Naive thymus-derived CD4-positive, alpha-beta T cell (primary cell): ENCODE measurements at regions of chr1 and their contacts with region 1.

Region 1: GRCh38 chr1:225977937-225978748 is 21.0 kb downstream of the SDE2 start:
- DNase-seq: no peak
- ATAC-seq: peak; percentile 30
- H3K4me3 ChIP-seq: no peak overlapping the region
- H3K4me3 Mint-ChIP-seq: no peak overlapping the region
- H3K27ac ChIP-seq: no peak overlapping the region
- H3K27ac Mint-ChIP-seq: peak overlapping the region in 1 of 9 donors; percentile 20
- H3K4me1 ChIP-seq: no peaks in the 10 kb centered on the region
- H3K4me1 Mint-ChIP-seq: peaks cover 0 to 9% (median 6%) of the 10 kb centered on the region in 7 donors
- H3K27me3 ChIP-seq: no peaks in the 10 kb centered on the region
- H3K27me3 Mint-ChIP-seq: no peaks in the 10 kb centered on the region

Region 2: GRCh38 chr1:225318706-225319575 is 659.2 kb before region 1 on chr1:
- CTCF ChIA-PET with region 1: interaction called, 5 read pairs
- POLR2A ChIA-PET with region 1: no interaction called
- intact Hi-C with region 1: loop called (anchors 1 kb)
- DNase-seq: peak in 5 of 9 donors; percentile 2 to 28 (median 12)
- ATAC-seq: peak; percentile 65
- H3K4me3 ChIP-seq: no peak overlapping the region
- H3K4me3 Mint-ChIP-seq: no peak overlapping the region
- H3K27ac ChIP-seq: no peak overlapping the region
- H3K27ac Mint-ChIP-seq: no peak overlapping the region
- H3K4me1 ChIP-seq: no peaks in the 10 kb centered on the region
- H3K4me1 Mint-ChIP-seq: peaks cover 0 to 4% (median 0%) of the 10 kb centered on the region in 7 donors
- H3K27me3 ChIP-seq: no peaks in the 10 kb centered on the region
- H3K27me3 Mint-ChIP-seq: peaks cover 0 to 10% (median 5%) of the 10 kb centered on the region in 5 donors

Region 3: DNA sequence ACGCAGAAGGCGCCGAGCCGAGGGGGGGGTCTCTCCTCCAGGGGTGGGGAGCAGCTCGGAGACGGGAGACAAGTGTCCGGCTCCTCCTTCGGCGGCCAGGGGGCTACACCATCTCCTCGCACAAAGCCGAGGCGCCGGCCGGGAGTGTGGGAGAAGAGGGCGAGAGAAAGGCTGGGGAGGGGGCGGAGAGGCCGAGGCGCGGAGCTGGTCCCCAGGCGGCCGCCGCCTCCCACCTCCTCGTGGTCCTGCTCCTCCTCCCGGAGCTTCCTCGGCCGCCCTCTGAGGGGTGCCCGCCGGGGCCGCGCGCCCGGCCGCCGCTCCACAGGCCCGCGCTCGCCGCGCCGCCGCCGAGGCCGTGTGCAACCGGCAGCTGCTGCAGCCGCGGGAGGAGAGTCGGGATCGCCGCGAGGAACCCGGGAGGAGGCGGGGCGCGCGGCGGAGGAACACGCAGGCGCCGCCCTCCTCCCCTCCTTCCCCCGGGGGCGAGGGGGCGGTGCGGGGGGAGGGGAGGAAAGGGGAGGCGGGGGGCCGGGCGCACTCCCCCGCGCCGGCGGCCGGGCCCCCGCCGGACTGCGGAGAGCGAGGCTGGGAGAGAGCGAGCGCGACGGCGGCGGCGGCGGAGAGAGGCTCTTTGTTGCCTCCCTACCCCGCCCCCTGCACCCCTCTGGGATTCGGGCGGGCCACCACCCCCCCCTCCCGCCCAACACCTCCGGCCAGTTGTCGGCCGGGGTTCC is 325.2 kb before region 1 on chr1 and contains the start of gene ENAH:
- CTCF ChIA-PET with region 1: no interaction called
- POLR2A ChIA-PET with region 1: interaction called, 4 read pairs
- intact Hi-C with region 1: loop called in 1 of 2 experiments (anchors 10 kb)
- DNase-seq: peak in 7 of 9 donors; percentile 12 to 49 (median 21)
- ATAC-seq: peak; percentile 72
- H3K4me3 ChIP-seq: peak within 1 kb of the TSS; percentile 58
- H3K4me3 Mint-ChIP-seq: peak within 1 kb of the TSS; percentile 79 to 95 (median 88)
- H3K27ac ChIP-seq: no peak within 1 kb of the TSS
- H3K27ac Mint-ChIP-seq: peak within 1 kb of the TSS in 4 of 9 donors; percentile 16 to 78 (median 70)
- H3K4me1 ChIP-seq: peaks cover 5 to 12% of the 10 kb centered on the region in 2 donors
- H3K4me1 Mint-ChIP-seq: peaks cover 9 to 19% (median 16%) of the 10 kb centered on the region in 7 donors
- H3K27me3 ChIP-seq: peaks cover 0 to 12% of the 10 kb centered on the region in 2 donors
- H3K27me3 Mint-ChIP-seq: peaks cover 30 to 71% (median 40%) of the 10 kb centered on the region in 5 donors
- total RNA-seq, gene ENAH: 0.08 to 0.42 (median 0.16) TPM in 3 of 5 experiments, not detected in the others

Region 4: GRCh38 chr1:225845571-225846259 is 132.4 kb before region 1 on chr1:
- CTCF ChIA-PET with region 1: no interaction called
- POLR2A ChIA-PET with region 1: no interaction called
- intact Hi-C with region 1: loop called in 1 of 2 experiments (anchors 5 kb)
- DNase-seq: peak in 4 of 9 donors; percentile 35 to 55 (median 46)
- ATAC-seq: peak; percentile 36
- H3K4me3 ChIP-seq: no peak overlapping the region
- H3K4me3 Mint-ChIP-seq: no peak overlapping the region
- H3K27ac ChIP-seq: no peak overlapping the region
- H3K27ac Mint-ChIP-seq: peak overlapping the region in 6 of 9 donors; percentile 12 to 98 (median 36)
- H3K4me1 ChIP-seq: peaks cover 37 to 38% of the 10 kb centered on the region in 2 donors
- H3K4me1 Mint-ChIP-seq: peaks cover 19 to 50% (median 43%) of the 10 kb centered on the region in 7 donors
- H3K27me3 ChIP-seq: no peaks in the 10 kb centered on the region
- H3K27me3 Mint-ChIP-seq: no peaks in the 10 kb centered on the region